SK-N-SH (cell line): ENCODE measurements at regions of chr17 and their contacts with region 1.

Region 1: GRCh38 chr17:28552246-28552999 is at the start of gene UNC119:
- DNase-seq: peak; percentile 99
- H3K4me3 ChIP-seq: peak within 1 kb of the TSS; percentile 70 to 90
- H3K27ac ChIP-seq: peak within 1 kb of the TSS; percentile 39 to 81
- H3K4me1 ChIP-seq: peaks cover 3 to 33% of the 10 kb centered on the region in 2 experiments; a peak in 2 of 4 replicates
- H3K27me3 ChIP-seq: no peaks in the 10 kb centered on the region
- CTCF ChIP-seq: no peak
- EP300 ChIP-seq: no peak
- RAD21 ChIP-seq: no peak
- polyA plus RNA-seq, gene UNC119: 89.9 and 106 TPM in 2 replicates

Region 2: DNA sequence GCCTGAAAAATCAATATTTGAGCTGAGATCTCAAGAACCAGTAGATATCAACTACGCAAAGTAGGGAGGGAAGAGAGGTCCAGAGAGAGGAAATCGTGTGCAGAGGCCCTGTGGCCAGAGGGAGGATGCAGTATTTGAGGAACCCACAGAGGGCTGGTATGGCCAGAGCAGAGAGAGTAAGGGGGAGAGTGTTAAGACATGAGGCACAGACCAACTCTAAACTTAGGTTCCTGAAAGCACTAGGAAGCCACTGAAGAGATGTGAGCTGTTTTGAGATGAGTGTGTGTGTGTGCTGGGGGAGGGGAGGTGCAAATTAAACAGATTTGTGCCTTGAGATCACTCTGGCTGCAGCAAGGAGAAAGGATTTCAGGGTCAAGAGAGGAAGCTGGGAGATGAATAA is 68.1 kb before region 1 on chr17:
- CTCF ChIA-PET with region 1: interaction called, 15 read pairs
- POLR2A ChIA-PET with region 1: no interaction called
- DNase-seq: no peak
- H3K4me3 ChIP-seq: no peak overlapping the region
- H3K27ac ChIP-seq: no peak overlapping the region
- H3K4me1 ChIP-seq: no peaks in the 10 kb centered on the region
- H3K27me3 ChIP-seq: peaks cover 19% of the 10 kb centered on the region; the same call in 1 of the 2 replicates
- CTCF ChIP-seq: no peak
- EP300 ChIP-seq: no peak
- RAD21 ChIP-seq: no peak

Region 3: GRCh38 chr17:28528329-28529014 is 24.0 kb before region 1 on chr17:
- CTCF ChIA-PET with region 1: interaction called, 47 read pairs
- POLR2A ChIA-PET with region 1: no interaction called
- DNase-seq: no peak
- H3K4me3 ChIP-seq: no peak overlapping the region
- H3K27ac ChIP-seq: no peak overlapping the region
- H3K4me1 ChIP-seq: peaks cover 0 to 6% of the 10 kb centered on the region in 2 experiments; a peak in 1 of 4 replicates
- H3K27me3 ChIP-seq: peaks cover 10% of the 10 kb centered on the region; the same call in 1 of the 2 replicates
- CTCF ChIP-seq: no peak
- EP300 ChIP-seq: no peak
- RAD21 ChIP-seq: no peak

Region 4: GRCh38 chr17:28540231-28540630 is 12.2 kb before region 1 on chr17:
- CTCF ChIA-PET with region 1: interaction called, 47 read pairs
- POLR2A ChIA-PET with region 1: no interaction called
- DNase-seq: peak; percentile 21
- H3K4me3 ChIP-seq: no peak overlapping the region
- H3K27ac ChIP-seq: no peak overlapping the region
- H3K4me1 ChIP-seq: no peaks in the 10 kb centered on the region
- H3K27me3 ChIP-seq: no peaks in the 10 kb centered on the region
- CTCF ChIP-seq: no peak
- EP300 ChIP-seq: no peak
- RAD21 ChIP-seq: no peak

Region 5: DNA sequence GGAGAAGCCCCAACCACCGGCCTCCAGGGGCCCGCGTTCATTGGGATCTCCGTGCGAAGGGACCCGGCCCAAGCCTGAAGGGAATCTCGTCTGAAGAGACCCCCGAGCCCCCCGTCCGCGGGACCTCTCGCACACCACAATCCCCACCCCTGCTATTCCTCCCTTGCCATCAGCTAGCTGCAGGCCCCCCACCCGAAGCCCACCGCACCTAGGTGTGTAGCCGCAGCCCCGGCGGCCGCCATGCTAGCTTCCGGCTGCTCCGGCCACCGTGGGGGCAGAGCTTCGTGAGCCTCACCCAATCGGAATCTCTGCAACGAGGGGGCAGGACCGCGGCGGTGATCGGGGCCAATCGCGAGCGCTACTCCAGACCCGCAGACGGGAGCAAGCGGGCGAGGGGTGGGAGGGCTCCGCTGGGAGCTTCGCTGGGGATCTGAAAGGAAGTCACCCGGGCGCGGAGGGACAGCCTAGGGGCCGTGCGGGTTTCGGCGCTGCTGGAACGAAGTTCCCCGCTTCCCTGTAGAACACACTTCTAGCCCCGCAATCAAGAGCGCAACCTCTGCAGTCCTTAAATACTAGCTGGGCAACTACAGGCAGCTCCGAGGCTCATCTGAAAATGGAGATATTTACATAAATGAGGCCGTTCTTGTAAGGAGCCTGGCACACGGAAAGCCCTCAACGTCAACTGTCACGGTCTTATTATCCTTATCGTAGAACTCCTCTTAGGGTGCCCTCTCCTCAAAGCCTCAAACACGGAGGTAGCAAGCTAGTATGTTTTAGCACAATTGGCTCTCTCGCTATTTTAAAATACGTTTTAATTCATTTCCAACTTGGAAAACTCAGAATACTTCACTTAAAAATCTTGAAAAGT is 19.1 kb after region 1 on chr17 and contains the start of gene PIGS:
- CTCF ChIA-PET with region 1: interaction called, 19 read pairs
- POLR2A ChIA-PET with region 1: no interaction called
- DNase-seq: peak; percentile 98
- H3K4me3 ChIP-seq: peak within 1 kb of the TSS; percentile 82 to 95
- H3K27ac ChIP-seq: peak within 1 kb of the TSS; percentile 29 to 81; a peak in 3 of 4 replicates
- H3K4me1 ChIP-seq: peaks cover 4 to 32% of the 10 kb centered on the region in 2 experiments; a peak in 3 of 4 replicates
- H3K27me3 ChIP-seq: no peaks in the 10 kb centered on the region
- CTCF ChIP-seq: no peak
- EP300 ChIP-seq: no peak
- RAD21 ChIP-seq: no peak
- polyA plus RNA-seq, gene PIGS: 54.9 and 78.5 TPM in 2 replicates

Region 6: DNA sequence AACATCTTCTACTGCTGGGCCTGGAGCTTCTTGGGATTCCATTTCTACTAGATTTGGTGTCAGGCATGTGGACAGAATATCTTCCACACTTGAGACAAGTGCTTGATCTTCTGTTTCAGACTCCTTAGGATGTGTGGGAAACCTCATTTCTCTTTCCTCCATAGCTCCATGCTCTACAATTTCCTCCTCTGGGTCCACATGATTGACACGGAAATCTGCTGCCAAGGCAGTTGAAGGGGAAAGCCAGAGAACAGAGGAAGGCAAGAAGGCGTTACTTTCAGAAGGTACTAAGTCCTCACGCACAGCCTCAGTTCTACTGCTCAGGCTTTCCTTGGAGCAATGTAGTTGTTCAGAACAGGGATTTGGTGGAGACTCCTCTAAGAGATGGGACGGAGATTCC is 39.8 kb after region 1 on chr17:
- CTCF ChIA-PET with region 1: interaction called, 11 read pairs
- POLR2A ChIA-PET with region 1: interaction called, 3 read pairs
- DNase-seq: no peak
- H3K4me3 ChIP-seq: no peak overlapping the region
- H3K27ac ChIP-seq: no peak overlapping the region
- H3K4me1 ChIP-seq: no peaks in the 10 kb centered on the region
- H3K27me3 ChIP-seq: no peaks in the 10 kb centered on the region
- CTCF ChIP-seq: no peak
- EP300 ChIP-seq: no peak
- RAD21 ChIP-seq: no peak

Region 7: DNA sequence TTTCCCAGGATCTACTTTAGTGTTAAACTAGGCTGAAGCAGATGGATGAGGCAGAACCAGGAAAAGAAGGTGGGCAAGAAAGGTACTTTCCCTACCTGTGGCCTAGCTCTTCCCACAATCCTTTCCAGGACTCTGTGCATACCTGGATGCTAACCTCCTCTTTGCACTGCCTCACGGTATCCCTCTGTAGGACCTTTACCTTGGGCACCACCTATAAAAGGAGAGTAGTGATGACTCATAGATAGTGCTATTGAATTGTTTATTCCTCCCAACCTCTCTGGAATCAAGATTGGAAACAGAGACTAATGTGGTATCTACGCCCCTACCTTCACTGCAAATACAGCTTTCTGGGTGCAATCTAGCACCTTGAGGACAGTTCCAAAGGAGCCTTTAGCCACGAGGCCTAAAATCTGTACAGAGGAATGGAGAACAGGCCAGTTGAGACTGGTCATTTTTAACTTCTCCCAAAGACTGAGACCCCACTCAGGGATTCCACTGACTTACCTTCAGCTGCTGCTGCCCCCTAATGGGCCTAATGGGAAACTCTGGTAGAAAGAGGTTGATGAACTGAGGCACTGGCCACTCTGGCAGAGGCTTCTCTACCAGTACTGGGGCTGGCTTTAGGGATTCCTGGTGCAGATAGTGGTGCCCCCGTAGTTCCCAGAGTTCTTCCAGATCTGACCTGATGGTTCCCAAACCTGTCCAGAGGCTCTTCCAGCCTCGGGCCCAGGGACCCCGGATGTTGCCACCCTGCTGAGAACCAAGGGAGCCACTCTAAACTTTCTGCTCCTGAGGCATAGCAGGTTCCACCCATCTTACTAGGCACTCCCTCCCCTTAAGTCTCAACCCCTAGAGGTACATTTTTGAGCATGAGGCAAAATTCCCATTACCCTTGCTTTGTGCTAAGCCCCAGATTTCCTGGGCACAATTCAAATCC is 60.8 kb after region 1 on chr17:
- CTCF ChIA-PET with region 1: interaction called, 60 read pairs
- POLR2A ChIA-PET with region 1: no interaction called
- DNase-seq: peak; percentile 70
- H3K4me3 ChIP-seq: no peak overlapping the region
- H3K27ac ChIP-seq: no peak overlapping the region
- H3K4me1 ChIP-seq: no peaks in the 10 kb centered on the region
- H3K27me3 ChIP-seq: no peaks in the 10 kb centered on the region
- CTCF ChIP-seq: peak; percentile 72
- EP300 ChIP-seq: no peak
- RAD21 ChIP-seq: peak; percentile 75

Region 8: GRCh38 chr17:28698253-28698941 is 146.0 kb after region 1 on chr17:
- CTCF ChIA-PET with region 1: no interaction called
- POLR2A ChIA-PET with region 1: no interaction called
- DNase-seq: no peak
- H3K4me3 ChIP-seq: no peak overlapping the region
- H3K27ac ChIP-seq: no peak overlapping the region
- H3K4me1 ChIP-seq: no peaks in the 10 kb centered on the region
- H3K27me3 ChIP-seq: no peaks in the 10 kb centered on the region
- CTCF ChIP-seq: no peak
- EP300 ChIP-seq: no peak
- RAD21 ChIP-seq: no peak

Region 9: DNA sequence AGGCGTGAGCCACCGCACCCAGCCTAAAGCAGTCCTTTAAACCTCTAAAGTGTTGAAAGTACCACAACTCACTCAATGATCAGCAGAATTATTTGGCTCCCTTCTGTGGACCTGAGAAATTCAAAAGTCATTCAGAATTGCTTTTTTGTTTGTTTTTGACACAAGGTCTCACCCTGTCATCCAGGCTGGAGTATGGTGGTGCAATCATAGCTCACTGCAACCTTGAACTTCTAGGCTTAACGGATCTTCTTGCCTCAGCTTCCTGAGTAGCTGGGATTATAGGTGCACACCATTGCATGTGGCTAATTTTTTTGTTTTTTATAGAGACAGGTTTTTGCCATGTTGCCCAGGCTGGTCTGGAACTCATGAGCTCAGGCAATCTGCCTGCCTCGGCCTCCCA is 235.7 kb after region 1 on chr17:
- CTCF ChIA-PET with region 1: no interaction called
- POLR2A ChIA-PET with region 1: no interaction called
- DNase-seq: no peak
- H3K4me3 ChIP-seq: no peak overlapping the region
- H3K27ac ChIP-seq: no peak overlapping the region
- H3K4me1 ChIP-seq: no peaks in the 10 kb centered on the region
- H3K27me3 ChIP-seq: no peaks in the 10 kb centered on the region
- CTCF ChIP-seq: no peak
- EP300 ChIP-seq: no peak
- RAD21 ChIP-seq: no peak